ENCODE measurements at regions of chr10 and their contacts with region 1.

Region 1: DNA sequence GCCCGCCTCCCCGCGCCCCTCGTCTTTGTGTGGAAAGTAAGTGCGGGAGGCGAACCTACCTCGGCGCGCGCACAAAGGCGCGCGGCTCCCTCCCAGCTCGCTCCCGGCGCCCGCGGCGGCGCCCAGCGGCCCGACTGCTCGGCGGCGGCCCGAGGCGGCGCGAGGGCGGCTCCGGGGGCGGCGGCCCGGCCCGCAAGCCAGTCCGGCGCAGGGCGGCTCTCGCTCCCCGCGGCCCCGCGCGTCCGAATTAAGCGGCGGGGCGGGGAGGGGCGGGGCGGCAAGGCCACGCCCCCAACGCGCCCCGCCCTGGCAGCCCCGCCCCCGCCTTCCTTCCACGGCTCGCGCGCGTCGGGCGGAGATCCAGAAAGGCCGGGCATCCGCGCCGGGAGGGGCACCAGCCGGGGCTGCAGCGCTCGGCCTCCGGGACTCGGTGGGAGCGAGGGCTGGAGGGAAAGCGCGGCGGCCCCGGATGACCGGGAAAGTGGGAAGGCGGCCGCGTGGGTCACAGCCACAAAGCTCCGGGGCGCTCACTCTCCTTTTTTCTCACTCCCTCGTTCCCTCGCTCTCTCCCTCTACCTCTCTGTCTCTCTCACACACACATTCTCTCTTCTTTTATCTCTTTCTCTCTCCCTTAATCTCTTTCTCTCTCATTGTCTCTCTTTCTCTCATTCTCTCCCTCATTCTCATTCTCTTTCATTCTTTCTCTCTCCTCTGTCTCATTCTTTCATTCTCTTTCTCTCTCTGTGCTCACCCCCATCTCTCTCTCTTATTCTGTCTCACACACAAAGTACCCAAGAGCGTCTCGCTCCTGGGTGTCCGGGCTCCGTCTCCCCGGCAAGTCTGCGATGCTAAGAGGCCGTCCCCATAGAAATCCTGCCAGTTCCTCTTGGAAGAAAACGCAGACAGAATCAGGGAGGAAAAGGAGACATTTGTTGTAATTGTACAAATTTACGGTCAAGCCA is 170.2 kb downstream of the FAM107B start:
- DNase-seq: peak; percentile 66
- H3K4me3 Mint-ChIP-seq: peak overlapping the region; percentile 87
- H3K27ac Mint-ChIP-seq: peak overlapping the region; percentile 94
- H3K4me1 Mint-ChIP-seq: peaks cover 63% of the 10 kb centered on the region
- H3K27me3 Mint-ChIP-seq: no peaks in the 10 kb centered on the region

Region 2: DNA sequence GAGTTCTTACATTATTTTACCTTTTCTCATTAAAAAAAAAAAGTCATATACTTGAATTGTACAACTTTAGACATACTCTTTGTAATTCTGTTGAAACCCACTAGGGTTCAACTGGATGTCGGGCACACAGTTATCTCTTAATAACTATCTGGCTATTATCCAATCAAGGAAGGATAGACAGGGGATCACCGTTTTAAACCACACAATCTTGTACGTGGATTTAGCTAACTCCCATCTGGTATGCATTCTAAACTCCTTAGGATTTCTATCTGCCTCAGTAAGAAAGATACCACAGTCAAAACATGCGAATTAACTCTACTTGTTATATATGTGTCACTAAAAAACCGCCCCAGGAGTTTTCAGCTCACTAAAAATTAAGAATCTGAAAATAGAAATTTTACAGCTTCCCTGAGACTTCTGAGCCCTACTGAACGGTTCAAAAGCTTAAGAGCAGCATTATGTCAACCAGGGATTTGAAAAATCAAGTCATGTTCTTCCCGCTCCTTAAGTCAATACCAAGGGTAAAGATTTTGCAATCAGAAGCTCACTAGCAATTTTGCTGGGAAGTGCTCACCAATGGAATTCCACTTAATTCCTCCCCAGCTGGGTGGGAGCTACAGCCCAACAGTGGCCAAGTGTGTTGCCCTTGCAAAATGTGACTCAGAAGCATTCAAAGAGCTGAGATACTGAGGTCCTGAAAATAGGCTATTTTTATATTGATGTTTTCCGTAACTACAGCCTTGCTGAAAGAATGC is 540.8 kb before region 1 on chr10:
- CTCF ChIA-PET with region 1: no interaction called
- intact Hi-C with region 1: no loop called
- DNase-seq: no peak
- H3K4me3 Mint-ChIP-seq: no peak overlapping the region
- H3K27ac Mint-ChIP-seq: no peak overlapping the region
- H3K4me1 Mint-ChIP-seq: no peaks in the 10 kb centered on the region
- H3K27me3 Mint-ChIP-seq: no peaks in the 10 kb centered on the region

Region 3: GRCh38 chr10:14507176-14507575 is 97.3 kb before region 1 on chr10:
- CTCF ChIA-PET with region 1: no interaction called
- intact Hi-C with region 1: loop called (anchors 1 kb)
- DNase-seq: peak; percentile 76
- H3K4me3 Mint-ChIP-seq: no peak overlapping the region
- H3K27ac Mint-ChIP-seq: peak overlapping the region; percentile 59
- H3K4me1 Mint-ChIP-seq: peaks cover 42% of the 10 kb centered on the region
- H3K27me3 Mint-ChIP-seq: no peaks in the 10 kb centered on the region

Region 4: GRCh38 chr10:14571866-14572507 is 32.5 kb before region 1 on chr10:
- CTCF ChIA-PET with region 1: no interaction called
- intact Hi-C with region 1: loop called (anchors 1 kb)
- DNase-seq: peak; percentile 78
- H3K4me3 Mint-ChIP-seq: peak overlapping the region; percentile 69
- H3K27ac Mint-ChIP-seq: peak overlapping the region; percentile 97
- H3K4me1 Mint-ChIP-seq: peaks cover 81% of the 10 kb centered on the region
- H3K27me3 Mint-ChIP-seq: no peaks in the 10 kb centered on the region

Region 5: GRCh38 chr10:14659626-14660196 is 55.2 kb after region 1 on chr10:
- CTCF ChIA-PET with region 1: no interaction called
- intact Hi-C with region 1: loop called (anchors 1 kb)
- DNase-seq: peak; percentile 67
- H3K4me3 Mint-ChIP-seq: peak overlapping the region; percentile 32
- H3K27ac Mint-ChIP-seq: peak overlapping the region; percentile 89
- H3K4me1 Mint-ChIP-seq: peaks cover 68% of the 10 kb centered on the region
- H3K27me3 Mint-ChIP-seq: no peaks in the 10 kb centered on the region

Region 6: GRCh38 chr10:14742815-14743214 is 138.4 kb after region 1 on chr10:
- CTCF ChIA-PET with region 1: no interaction called
- intact Hi-C with region 1: loop called (anchors 5 kb)
- DNase-seq: peak; percentile 18
- H3K4me3 Mint-ChIP-seq: no peak overlapping the region
- H3K27ac Mint-ChIP-seq: peak overlapping the region; percentile 64
- H3K4me1 Mint-ChIP-seq: peaks cover 31% of the 10 kb centered on the region
- H3K27me3 Mint-ChIP-seq: no peaks in the 10 kb centered on the region

Region 7: DNA sequence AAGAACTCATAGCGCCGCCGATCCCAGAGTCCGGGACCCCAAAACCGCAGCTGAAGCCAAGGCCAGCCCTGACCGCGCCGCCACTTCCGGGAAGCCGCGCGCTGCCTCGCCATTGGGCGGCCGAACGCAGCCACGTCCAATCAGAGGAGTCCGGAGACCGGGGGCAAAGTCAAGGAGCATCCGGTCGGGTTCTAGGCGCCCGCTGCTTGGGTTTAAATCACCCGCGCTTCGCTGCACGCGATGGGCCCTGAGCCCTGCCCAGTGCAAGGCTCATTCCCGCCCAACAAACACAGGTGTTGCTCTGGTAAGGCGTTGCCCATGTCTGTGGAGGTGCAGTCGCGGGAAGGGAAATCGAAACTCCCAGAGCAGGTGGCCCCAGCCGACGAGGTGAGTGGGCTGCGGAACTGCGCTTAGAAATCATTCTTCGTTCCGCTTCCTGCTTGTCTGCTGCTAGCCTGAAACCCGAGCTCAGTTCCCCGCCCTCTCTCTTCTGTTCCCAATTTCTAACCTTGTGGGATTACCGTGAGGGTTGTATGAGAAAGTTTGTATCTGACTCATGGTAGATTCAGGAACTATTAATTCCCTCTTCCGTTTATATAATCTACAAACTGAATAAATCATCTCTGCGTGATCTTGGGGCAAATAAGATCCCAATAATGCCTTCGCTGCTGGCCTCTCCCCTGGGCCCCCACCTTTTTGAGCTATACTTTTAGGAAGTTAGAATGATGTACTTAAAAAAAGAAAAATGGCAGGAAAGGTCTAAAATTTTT is 349.7 kb after region 1 on chr10 and contains the start of gene DCLRE1C:
- CTCF ChIA-PET with region 1: interaction called, 3 read pairs
- intact Hi-C with region 1: loop called (anchors 2 kb)
- DNase-seq: peak; percentile 91
- H3K4me3 Mint-ChIP-seq: peak within 1 kb of the TSS; percentile 90
- H3K27ac Mint-ChIP-seq: peak within 1 kb of the TSS; percentile 93
- H3K4me1 Mint-ChIP-seq: peaks cover 54% of the 10 kb centered on the region
- H3K27me3 Mint-ChIP-seq: no peaks in the 10 kb centered on the region
- total RNA-seq, gene DCLRE1C: 9.8 to 13.9 TPM

Measured in activated naive CD4-positive, alpha-beta T cell treated with anti-CD3 and anti-CD28 coated beads for 36 hours (primary cell).